Heart right ventricle (tissue), 16 donors: ENCODE measurements at regions of chr3 and their contacts with region 1.

Region 1: GRCh38 chr3:160038862-160039562 is 50.4 kb downstream of the IL12A start:
- DNase-seq: peak in 1 of 2 donors; percentile 15
- ATAC-seq: peak; percentile 25 to 57 (median 40)
- H3K4me3 ChIP-seq: peak overlapping the region in 9 of 10 donors; percentile 11 to 48 (median 46)
- H3K27ac ChIP-seq: no peak overlapping the region
- H3K4me1 ChIP-seq: peaks cover 0 to 8% (median 3%) of the 10 kb centered on the region in 9 donors
- H3K27me3 ChIP-seq: peaks cover 0 to 48% (median 37%) of the 10 kb centered on the region in 7 donors
- CTCF ChIP-seq: no peak

Region 2: DNA sequence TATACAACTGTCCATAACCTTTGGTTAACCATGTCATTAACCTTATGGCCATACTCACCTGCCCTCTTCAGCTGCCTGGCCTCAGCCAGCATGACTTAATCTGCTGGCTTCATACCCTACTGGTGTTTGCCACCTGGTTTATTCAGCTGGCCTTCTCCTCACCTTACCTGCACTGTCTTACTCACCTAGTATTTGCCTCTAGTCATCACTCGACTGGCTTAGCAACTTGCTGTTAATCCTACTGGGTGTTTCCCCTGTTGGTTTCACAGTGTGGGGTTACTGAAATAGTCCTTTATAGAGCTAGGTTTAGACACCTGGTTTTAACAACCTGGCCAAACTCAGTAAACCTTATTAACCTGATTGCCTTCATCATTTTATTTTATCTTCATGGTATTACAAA is 46.0 kb after region 1 on chr3:
- intact Hi-C with region 1: no loop called
- DNase-seq: no peak
- ATAC-seq: no peak
- H3K4me3 ChIP-seq: no peak overlapping the region
- H3K27ac ChIP-seq: no peak overlapping the region
- H3K4me1 ChIP-seq: no peaks in the 10 kb centered on the region
- H3K27me3 ChIP-seq: no peaks in the 10 kb centered on the region
- CTCF ChIP-seq: no peak

Region 3: GRCh38 chr3:160099834-160100233 is 60.8 kb after region 1 on chr3:
- intact Hi-C with region 1: no loop called
- DNase-seq: no peak
- ATAC-seq: no peak
- H3K4me3 ChIP-seq: no peak overlapping the region
- H3K27ac ChIP-seq: no peak overlapping the region
- H3K4me1 ChIP-seq: no peaks in the 10 kb centered on the region
- H3K27me3 ChIP-seq: peaks cover 0 to 8% (median 0%) of the 10 kb centered on the region in 7 donors
- CTCF ChIP-seq: no peak

Region 4: DNA sequence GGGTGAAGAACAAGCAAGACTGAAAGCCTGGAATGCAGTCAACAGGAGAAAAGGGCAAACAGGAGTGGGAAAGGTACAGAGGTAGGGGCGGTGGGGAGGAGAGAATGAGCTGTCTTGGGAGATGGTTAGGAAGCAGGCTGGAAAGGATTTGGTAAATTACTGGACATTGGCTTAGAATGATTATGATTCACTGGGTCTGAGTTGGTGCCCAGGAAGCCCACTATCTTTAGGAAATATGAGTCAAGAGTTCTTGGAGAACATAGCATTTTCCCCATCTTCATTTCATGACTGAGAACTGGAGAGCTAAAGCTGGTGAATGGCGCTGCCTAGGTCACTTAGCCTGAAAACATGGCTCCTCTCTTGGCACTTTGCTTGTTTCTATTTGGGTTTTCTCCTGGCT is 111.5 kb after region 1 on chr3:
- intact Hi-C with region 1: loop called in 1 of 10 experiments (anchors 10 kb)
- DNase-seq: no peak
- ATAC-seq: peak in 5 of 8 donors; percentile 18 to 61 (median 34)
- H3K4me3 ChIP-seq: no peak overlapping the region
- H3K27ac ChIP-seq: peak overlapping the region in 1 of 10 donors; percentile 43
- H3K4me1 ChIP-seq: no peaks in the 10 kb centered on the region
- H3K27me3 ChIP-seq: peaks cover 0 to 9% (median 0%) of the 10 kb centered on the region in 7 donors
- CTCF ChIP-seq: no peak

Region 5: DNA sequence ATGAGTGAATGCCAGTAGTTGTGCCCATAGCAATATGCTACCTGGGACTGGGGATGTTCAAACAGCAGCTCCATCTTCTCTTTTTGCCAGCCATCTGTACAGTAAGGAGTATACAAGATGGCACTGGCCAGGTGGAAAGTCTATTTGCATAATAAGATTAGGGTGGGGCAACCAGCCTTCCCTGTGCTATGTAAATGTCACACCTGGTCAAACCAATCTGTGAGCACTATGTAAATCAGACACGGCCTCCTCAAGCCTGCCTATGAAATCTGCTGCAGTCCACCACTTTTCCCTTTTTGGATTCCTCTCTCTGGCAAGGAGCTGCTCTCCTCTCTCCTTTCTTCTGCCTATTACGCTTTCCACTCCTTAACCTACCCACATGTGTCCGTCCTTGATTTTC is 239.2 kb after region 1 on chr3:
- intact Hi-C with region 1: no loop called
- DNase-seq: no peak
- ATAC-seq: no peak
- H3K4me3 ChIP-seq: no peak overlapping the region
- H3K27ac ChIP-seq: no peak overlapping the region
- H3K4me1 ChIP-seq: no peaks in the 10 kb centered on the region
- H3K27me3 ChIP-seq: no peaks in the 10 kb centered on the region
- CTCF ChIP-seq: no peak

Region 6: GRCh38 chr3:160312014-160312624 is 273.1 kb after region 1 on chr3:
- intact Hi-C with region 1: no loop called
- DNase-seq: no peak
- ATAC-seq: no peak
- H3K4me3 ChIP-seq: no peak overlapping the region
- H3K27ac ChIP-seq: no peak overlapping the region
- H3K4me1 ChIP-seq: no peaks in the 10 kb centered on the region
- H3K27me3 ChIP-seq: no peaks in the 10 kb centered on the region
- CTCF ChIP-seq: no peak